ENCODE measurements at regions of chr7 and their contacts with region 1.

Region 1: GRCh38 chr7:112398534-112398933 is 51.7 kb upstream of the IFRD1 start:
- DNase-seq: no peak
- ATAC-seq: peak; percentile 81
- H3K4me3 Mint-ChIP-seq: no peak overlapping the region
- H3K27ac Mint-ChIP-seq: peak overlapping the region; percentile 5
- H3K4me1 Mint-ChIP-seq: peaks cover 18% of the 10 kb centered on the region
- H3K27me3 Mint-ChIP-seq: no peaks in the 10 kb centered on the region

Region 2: DNA sequence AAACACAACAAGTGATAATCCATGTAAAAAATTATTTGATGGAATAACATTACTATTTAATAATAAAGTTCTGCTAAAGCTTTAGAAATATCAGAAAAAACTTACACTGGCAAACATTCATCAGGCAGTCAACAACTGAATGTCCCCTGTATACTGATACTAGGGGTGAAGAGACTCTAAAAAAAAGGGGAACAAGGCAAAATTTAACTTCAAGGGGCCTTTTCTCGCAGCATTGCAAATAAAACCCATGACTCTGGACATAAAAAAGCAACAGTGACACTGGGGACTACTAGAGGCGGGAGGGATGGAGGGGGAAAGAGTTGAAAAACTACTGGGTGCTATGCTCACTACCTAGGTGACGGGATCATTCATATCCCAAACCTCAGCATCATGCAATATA is 46.0 kb after region 1 on chr7:
- CTCF ChIA-PET with region 1: interaction called, 3 read pairs
- POLR2A ChIA-PET with region 1: no interaction called
- intact Hi-C with region 1: loop called in 1 of 2 experiments (anchors 2 kb)
- DNase-seq: no peak
- ATAC-seq: no peak
- H3K4me3 Mint-ChIP-seq: no peak overlapping the region
- H3K27ac Mint-ChIP-seq: no peak overlapping the region
- H3K4me1 Mint-ChIP-seq: peaks cover 21% of the 10 kb centered on the region
- H3K27me3 Mint-ChIP-seq: no peaks in the 10 kb centered on the region

Region 3: DNA sequence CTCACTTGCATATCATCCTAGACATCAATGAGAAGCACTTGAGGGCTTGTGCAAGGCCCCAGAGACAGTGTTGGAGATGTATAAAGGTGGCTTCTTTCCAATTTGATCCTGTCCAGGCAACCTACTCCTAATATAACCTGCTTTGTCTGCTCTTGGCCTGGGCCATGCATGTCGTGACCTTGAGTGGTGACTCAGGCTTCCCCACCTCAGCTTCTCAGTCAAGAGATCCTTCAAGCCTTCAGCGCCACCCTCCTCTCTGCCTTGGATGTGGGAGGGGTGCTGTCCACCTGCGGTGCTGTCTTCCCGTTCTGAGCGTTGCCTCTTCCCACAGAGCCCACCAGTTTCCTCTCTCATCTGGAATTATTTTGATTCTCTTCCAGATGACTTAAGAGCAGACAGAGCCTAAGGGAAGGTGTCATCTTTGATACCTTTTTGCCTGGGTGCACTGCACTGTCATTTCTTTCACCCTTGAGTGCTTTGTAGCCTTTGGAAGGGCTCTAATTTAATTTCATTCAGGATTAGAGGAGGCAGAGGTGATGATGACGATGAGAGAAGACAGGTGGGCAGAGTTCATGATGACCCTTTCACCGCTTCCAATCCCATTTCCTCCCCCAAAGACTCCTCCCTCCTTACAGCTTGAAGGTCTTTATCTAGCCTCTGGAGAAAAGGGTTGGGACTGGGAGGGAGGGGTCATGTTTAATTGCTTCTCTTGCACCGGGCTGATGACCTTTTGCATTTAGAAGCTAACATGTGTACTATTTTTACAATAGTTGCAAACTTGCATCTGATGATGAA is 89.1 kb after region 1 on chr7:
- CTCF ChIA-PET with region 1: no interaction called
- POLR2A ChIA-PET with region 1: no interaction called
- intact Hi-C with region 1: no loop called
- DNase-seq: no peak
- ATAC-seq: no peak
- H3K4me3 Mint-ChIP-seq: no peak overlapping the region
- H3K27ac Mint-ChIP-seq: no peak overlapping the region
- H3K4me1 Mint-ChIP-seq: peaks cover 8% of the 10 kb centered on the region
- H3K27me3 Mint-ChIP-seq: no peaks in the 10 kb centered on the region

Measured in activated CD4-positive, alpha-beta T cell treated with anti-CD3 and anti-CD28 coated beads for 36 hours (primary cell).